Naive thymus-derived CD4-positive, alpha-beta T cell (primary cell): ENCODE measurements at regions of chr5 and their contacts with region 1.

Region 1: DNA sequence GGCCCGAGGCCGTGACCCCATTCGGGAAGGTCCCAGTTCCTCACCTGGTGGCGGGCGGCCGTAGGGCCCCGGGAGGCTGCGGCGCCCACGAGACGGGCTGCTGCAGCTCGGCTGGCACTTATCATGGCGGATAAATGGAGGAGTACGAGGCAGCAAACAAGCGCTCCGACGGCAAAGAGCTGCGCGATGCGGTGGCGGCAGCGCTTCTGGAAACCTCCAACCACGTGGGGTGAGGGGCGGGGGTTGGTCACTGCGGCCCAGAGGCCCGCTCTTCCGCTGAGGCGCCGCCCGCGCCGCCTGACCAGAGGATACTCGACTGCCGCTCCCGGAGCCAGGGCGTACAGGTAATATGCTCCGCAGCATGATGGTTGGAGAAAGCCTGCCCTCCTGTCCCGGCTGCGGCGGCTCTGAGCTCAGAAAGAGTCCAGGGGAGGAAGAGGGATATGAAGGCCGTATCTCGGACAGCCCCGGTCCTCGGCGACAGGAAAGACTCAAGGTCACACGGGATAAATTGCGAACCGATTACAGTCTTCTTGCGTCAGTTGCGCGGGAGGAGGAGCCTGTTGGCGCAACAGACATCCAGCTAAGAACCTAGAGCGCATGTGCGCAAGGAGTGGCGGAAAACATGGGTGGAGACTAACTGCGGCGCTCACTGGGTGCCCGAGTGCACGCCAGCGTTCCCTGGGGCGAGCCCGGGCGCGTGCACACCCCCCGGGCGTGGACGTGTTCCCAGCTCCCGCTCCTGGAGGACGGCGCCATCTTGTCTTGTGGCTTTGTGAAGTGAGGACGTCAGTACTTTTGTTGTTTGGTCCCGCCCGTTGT is at the start of gene HSPA9:
- DNase-seq: peak; percentile 92 to 99 (median 98)
- ATAC-seq: peak; percentile 89
- H3K4me3 ChIP-seq: peak within 1 kb of the TSS; percentile 91
- H3K4me3 Mint-ChIP-seq: peak within 1 kb of the TSS; percentile 94 to 99 (median 97)
- H3K27ac ChIP-seq: peak within 1 kb of the TSS; percentile 94
- H3K27ac Mint-ChIP-seq: peak within 1 kb of the TSS; percentile 100
- H3K4me1 ChIP-seq: peaks cover 10 to 15% of the 10 kb centered on the region in 2 donors
- H3K4me1 Mint-ChIP-seq: peaks cover 15 to 48% (median 43%) of the 10 kb centered on the region in 7 donors
- H3K27me3 ChIP-seq: no peaks in the 10 kb centered on the region
- H3K27me3 Mint-ChIP-seq: peaks cover 0 to 4% (median 0%) of the 10 kb centered on the region in 5 donors
- total RNA-seq, gene HSPA9: 152 to 274 (median 185) TPM

Region 2: GRCh38 chr5:137923856-137924255 is 651.5 kb before region 1 on chr5:
- CTCF ChIA-PET with region 1: no interaction called
- POLR2A ChIA-PET with region 1: no interaction called
- intact Hi-C with region 1: no loop called
- DNase-seq: no peak
- ATAC-seq: no peak
- H3K4me3 ChIP-seq: no peak overlapping the region
- H3K4me3 Mint-ChIP-seq: no peak overlapping the region
- H3K27ac ChIP-seq: no peak overlapping the region
- H3K27ac Mint-ChIP-seq: no peak overlapping the region
- H3K4me1 ChIP-seq: no peaks in the 10 kb centered on the region
- H3K4me1 Mint-ChIP-seq: peaks cover 0 to 4% (median 0%) of the 10 kb centered on the region in 7 donors
- H3K27me3 ChIP-seq: no peaks in the 10 kb centered on the region
- H3K27me3 Mint-ChIP-seq: no peaks in the 10 kb centered on the region

Region 3: DNA sequence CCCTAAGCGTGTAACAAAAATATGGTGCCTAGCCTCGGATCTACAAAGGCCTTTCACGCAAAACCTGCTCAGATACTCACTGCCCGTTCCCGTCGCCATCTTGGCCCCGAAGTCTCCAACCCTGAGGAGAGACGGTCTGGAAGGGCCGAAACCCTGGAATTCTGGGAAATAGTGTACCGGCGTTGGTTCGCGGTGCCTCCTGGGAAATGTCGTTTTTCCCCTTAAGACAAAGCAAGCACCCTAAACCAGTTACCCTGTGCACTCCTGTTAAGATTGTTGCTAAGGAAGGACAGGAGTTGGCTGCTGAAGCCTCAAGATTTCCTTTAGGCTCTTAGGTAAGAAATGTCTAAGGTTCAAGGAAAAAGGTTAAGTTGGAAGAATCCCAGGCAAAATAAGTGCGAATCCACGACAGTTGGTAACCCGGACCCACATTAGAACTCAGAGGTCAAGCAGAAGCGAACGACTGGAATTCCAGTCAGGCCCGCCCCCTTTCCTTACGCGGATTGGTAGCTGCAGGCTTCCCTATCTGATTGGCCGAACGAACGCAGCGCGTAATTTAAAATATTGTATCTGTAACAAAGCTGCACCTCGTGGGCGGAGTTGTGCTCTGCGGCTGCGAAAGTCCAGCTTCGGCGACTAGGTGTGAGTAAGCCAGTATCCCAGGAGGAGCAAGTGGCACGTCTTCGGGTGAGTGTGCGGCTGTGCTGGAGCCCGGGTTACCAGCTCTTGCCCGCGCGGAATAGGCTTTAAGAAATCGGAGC is 396.7 kb before region 1 on chr5 and contains the starts of genes BRD8 and KIF20A:
- CTCF ChIA-PET with region 1: no interaction called
- POLR2A ChIA-PET with region 1: interaction called, 4 read pairs
- intact Hi-C with region 1: loop called (anchors 1 kb)
- DNase-seq: peak; percentile 62 to 89 (median 84)
- ATAC-seq: peak; percentile 92
- H3K4me3 ChIP-seq: peak within 1 kb of the TSS; percentile 85
- H3K4me3 Mint-ChIP-seq: peak within 1 kb of the TSS in 2 of 10 donors; percentile 23 to 51
- H3K27ac ChIP-seq: peak within 1 kb of the TSS; percentile 74
- H3K27ac Mint-ChIP-seq: peak within 1 kb of the TSS in 2 of 9 donors; percentile 38 to 60
- H3K4me1 ChIP-seq: peaks cover 10 to 15% of the 10 kb centered on the region in 2 donors
- H3K4me1 Mint-ChIP-seq: peaks cover 0 to 45% (median 17%) of the 10 kb centered on the region in 7 donors
- H3K27me3 ChIP-seq: no peaks in the 10 kb centered on the region
- H3K27me3 Mint-ChIP-seq: no peaks in the 10 kb centered on the region
- total RNA-seq, gene BRD8: 24.7 to 81.9 (median 66.1) TPM
- total RNA-seq, gene KIF20A: 0.29 to 34.1 TPM in 2 of 5 experiments, not detected in the others

Region 4: DNA sequence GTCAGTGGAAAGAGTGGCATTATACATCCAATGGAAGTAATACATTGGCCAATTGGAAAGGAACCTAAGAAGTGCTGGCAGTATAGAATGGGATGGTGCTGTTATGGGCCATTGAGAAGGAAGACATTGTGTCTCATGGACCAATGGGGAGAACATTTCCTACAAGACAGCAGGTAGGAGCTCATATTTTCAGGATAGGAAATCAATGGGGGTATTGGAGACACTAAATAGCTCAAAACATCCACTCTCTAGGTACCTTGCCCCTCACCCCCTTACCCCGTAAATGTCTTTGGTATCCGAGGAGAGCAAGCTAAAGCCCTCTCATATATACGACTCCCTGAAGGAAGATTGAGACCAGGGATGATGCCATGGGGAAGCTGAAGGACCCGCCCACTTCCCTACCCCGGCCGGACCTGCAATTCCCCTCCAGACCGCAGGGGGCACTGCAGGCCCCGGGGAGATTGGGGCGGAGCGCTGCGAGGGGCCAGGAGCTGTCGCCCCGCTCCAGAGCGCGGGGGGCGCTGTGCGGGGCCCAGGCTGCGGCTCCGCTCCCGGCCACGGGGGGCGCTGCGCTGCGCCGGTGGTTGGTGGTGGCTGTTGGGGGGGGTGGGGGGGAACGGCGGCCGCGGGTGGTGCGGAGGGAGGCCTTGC is 223.2 kb before region 1 on chr5 and contains the start of gene KDM3B:
- CTCF ChIA-PET with region 1: interaction called, 3 read pairs
- POLR2A ChIA-PET with region 1: interaction called, 8 read pairs
- intact Hi-C with region 1: loop called (anchors 1 kb)
- DNase-seq: peak; percentile 82 to 100 (median 96)
- ATAC-seq: peak; percentile 96
- H3K4me3 ChIP-seq: peak within 1 kb of the TSS; percentile 93
- H3K4me3 Mint-ChIP-seq: peak within 1 kb of the TSS; percentile 88 to 98 (median 96)
- H3K27ac ChIP-seq: peak within 1 kb of the TSS; percentile 91
- H3K27ac Mint-ChIP-seq: peak within 1 kb of the TSS; percentile 90 to 98 (median 96)
- H3K4me1 ChIP-seq: peaks cover 18 to 32% of the 10 kb centered on the region in 2 donors
- H3K4me1 Mint-ChIP-seq: peaks cover 30 to 54% (median 48%) of the 10 kb centered on the region in 7 donors
- H3K27me3 ChIP-seq: no peaks in the 10 kb centered on the region
- H3K27me3 Mint-ChIP-seq: no peaks in the 10 kb centered on the region
- total RNA-seq, gene KDM3B: 67.7 to 90.2 (median 82.8) TPM

Region 5: DNA sequence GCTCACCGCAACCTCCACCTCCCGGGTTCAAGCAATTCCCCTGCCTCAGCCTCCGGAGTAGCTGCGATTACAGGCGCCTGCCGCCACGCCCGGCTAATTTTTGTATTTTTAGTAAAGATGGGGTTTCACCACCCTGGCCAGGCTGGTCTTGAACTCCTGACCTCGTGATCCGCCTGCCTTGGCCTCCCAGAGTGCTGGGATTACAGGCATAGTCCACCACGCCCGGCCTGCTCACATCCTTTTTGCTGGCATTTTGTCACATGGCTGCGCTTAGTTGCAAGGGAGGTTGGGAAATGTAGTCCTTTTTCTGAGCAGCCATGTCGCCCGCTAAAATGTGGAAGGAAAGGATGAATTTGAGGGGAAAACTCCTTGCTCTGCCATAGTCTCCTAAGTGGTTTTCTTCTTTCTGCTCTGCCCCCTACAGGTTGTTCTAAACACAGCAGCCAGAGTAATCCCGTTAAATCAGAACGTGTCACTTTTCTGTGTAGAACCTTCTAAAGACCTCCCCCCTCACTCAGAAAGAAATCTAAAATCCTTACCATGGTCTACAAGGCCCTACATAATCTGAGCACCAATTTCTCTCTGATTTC is 57.6 kb after region 1 on chr5:
- CTCF ChIA-PET with region 1: interaction called, 5 read pairs
- POLR2A ChIA-PET with region 1: no interaction called
- intact Hi-C with region 1: loop called in 1 of 2 experiments (anchors 2 kb)
- DNase-seq: no peak
- ATAC-seq: peak; percentile 76
- H3K4me3 ChIP-seq: no peak overlapping the region
- H3K4me3 Mint-ChIP-seq: no peak overlapping the region
- H3K27ac ChIP-seq: no peak overlapping the region
- H3K27ac Mint-ChIP-seq: no peak overlapping the region
- H3K4me1 ChIP-seq: no peaks in the 10 kb centered on the region
- H3K4me1 Mint-ChIP-seq: peaks cover 0 to 7% (median 0%) of the 10 kb centered on the region in 7 donors
- H3K27me3 ChIP-seq: peaks cover 5 to 10% of the 10 kb centered on the region in 2 donors
- H3K27me3 Mint-ChIP-seq: peaks cover 52 to 64% (median 56%) of the 10 kb centered on the region in 5 donors

Region 6: DNA sequence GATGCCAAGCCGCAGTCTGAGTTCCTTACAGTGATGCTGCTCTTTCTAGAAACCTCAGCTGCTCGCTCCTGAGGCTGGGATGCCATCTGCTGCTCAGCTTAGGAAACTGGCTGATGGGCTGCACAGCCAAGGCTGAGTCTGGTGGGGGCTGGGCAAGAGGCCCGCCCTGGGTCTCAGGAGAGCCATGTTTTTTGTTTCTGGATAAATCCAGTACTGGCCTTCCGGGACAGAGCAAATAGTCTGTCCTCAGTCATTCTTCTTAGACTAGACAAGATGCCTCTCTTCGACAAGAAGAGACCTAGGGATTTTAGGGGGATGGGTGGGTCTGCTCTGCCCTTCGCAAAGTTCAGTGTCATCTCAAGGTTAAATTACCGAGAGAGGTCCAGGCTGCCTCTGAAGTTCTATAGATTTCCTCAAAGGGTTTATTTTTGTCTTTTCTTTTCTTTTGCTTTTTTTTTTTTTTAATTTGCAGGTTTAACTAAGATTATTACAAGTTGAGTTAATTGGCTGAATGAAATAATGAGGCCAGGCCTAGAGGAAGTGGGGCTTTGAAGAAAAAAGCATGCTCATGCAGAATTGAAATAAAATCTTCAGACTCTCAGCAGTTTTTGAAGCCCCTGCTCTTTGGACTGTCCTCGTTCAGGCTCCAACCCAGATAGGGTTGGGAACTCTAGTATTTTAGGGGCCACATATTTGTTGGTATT is 687.5 kb after region 1 on chr5:
- CTCF ChIA-PET with region 1: interaction called, 7 read pairs
- POLR2A ChIA-PET with region 1: interaction called, 4 read pairs
- intact Hi-C with region 1: loop called (anchors 1 kb)
- DNase-seq: peak; percentile 28 to 76 (median 62)
- ATAC-seq: peak; percentile 98
- H3K4me3 ChIP-seq: no peak overlapping the region
- H3K4me3 Mint-ChIP-seq: no peak overlapping the region
- H3K27ac ChIP-seq: no peak overlapping the region
- H3K27ac Mint-ChIP-seq: no peak overlapping the region
- H3K4me1 ChIP-seq: no peaks in the 10 kb centered on the region
- H3K4me1 Mint-ChIP-seq: peaks cover 4 to 11% (median 6%) of the 10 kb centered on the region in 7 donors
- H3K27me3 ChIP-seq: no peaks in the 10 kb centered on the region
- H3K27me3 Mint-ChIP-seq: peaks cover 0 to 37% (median 14%) of the 10 kb centered on the region in 5 donors

Region 7: GRCh38 chr5:139403787-139404483 is 828.5 kb after region 1 on chr5 and contains the start of gene SPATA24:
- CTCF ChIA-PET with region 1: no interaction called
- POLR2A ChIA-PET with region 1: no interaction called
- intact Hi-C with region 1: loop called (anchors 1 to 2 kb)
- DNase-seq: peak; percentile 90 to 99 (median 98)
- ATAC-seq: peak; percentile 94
- H3K4me3 ChIP-seq: peak within 1 kb of the TSS; percentile 56
- H3K4me3 Mint-ChIP-seq: peak within 1 kb of the TSS; percentile 88 to 98 (median 94)
- H3K27ac ChIP-seq: peak within 1 kb of the TSS; percentile 88
- H3K27ac Mint-ChIP-seq: peak within 1 kb of the TSS; percentile 96 to 100 (median 99)
- H3K4me1 ChIP-seq: peaks cover 16 to 18% of the 10 kb centered on the region in 2 donors
- H3K4me1 Mint-ChIP-seq: peaks cover 26 to 42% (median 36%) of the 10 kb centered on the region in 7 donors
- H3K27me3 ChIP-seq: no peaks in the 10 kb centered on the region
- H3K27me3 Mint-ChIP-seq: no peaks in the 10 kb centered on the region
- total RNA-seq, gene SPATA24: 4.4 to 7.6 (median 5.8) TPM

Region 8: DNA sequence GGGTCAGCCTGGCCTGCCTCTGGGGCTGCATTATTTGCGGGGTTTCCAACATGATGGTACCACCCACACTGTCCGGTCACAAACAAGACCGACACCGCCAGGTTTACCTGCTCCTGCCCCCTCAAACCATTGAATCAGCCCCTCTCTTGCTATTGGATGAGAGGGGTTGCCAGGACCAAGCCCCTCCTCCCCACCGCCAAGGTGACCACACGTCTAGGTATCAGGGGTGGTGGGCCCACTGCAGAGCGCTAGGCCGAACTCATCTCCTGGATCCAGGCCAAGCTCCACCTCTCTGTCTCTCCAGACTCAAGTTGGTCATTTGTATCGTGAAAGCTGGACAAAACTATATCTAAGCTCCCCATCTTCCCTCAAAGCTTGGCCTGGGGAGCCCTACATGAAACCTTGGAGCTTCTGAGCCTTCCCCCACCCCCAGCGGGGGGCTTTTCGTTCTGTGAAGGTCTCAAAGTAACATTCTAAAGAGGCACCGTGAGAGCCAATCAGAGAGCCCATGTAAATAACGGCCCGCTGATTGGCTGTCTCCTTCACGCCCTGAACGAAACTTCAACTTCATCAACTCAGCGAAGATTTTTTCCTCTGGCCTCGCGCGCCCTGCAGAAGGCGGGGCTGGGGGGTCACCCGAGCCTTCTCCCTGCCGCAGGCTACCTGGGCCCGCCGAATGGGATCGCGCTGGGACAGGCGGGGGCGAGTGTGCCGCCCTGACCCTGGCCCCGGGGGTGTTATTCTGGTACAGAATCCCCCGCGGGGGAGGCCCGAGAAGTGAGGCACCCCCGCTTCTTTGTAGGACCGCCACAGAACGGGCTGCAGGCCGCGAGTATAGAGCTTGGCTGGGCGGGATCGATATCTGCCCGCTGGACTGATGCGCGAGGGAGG is 1170.6 kb after region 1 on chr5:
- CTCF ChIA-PET with region 1: no interaction called
- POLR2A ChIA-PET with region 1: no interaction called
- intact Hi-C with region 1: no loop called
- DNase-seq: peak; percentile 31 to 64 (median 41)
- ATAC-seq: peak; percentile 68
- H3K4me3 ChIP-seq: peak overlapping the region; percentile 79
- H3K4me3 Mint-ChIP-seq: peak overlapping the region; percentile 88 to 100 (median 91)
- H3K27ac ChIP-seq: no peak overlapping the region
- H3K27ac Mint-ChIP-seq: peak overlapping the region in 4 of 9 donors; percentile 13 to 82 (median 52)
- H3K4me1 ChIP-seq: peaks cover 7 to 8% of the 10 kb centered on the region in 2 donors
- H3K4me1 Mint-ChIP-seq: peaks cover 18 to 25% (median 23%) of the 10 kb centered on the region in 7 donors
- H3K27me3 ChIP-seq: no peaks in the 10 kb centered on the region
- H3K27me3 Mint-ChIP-seq: peaks cover 7 to 67% (median 15%) of the 10 kb centered on the region in 5 donors